ENCODE measurements at regions of chr2 and their contacts with region 1.

Region 1: DNA sequence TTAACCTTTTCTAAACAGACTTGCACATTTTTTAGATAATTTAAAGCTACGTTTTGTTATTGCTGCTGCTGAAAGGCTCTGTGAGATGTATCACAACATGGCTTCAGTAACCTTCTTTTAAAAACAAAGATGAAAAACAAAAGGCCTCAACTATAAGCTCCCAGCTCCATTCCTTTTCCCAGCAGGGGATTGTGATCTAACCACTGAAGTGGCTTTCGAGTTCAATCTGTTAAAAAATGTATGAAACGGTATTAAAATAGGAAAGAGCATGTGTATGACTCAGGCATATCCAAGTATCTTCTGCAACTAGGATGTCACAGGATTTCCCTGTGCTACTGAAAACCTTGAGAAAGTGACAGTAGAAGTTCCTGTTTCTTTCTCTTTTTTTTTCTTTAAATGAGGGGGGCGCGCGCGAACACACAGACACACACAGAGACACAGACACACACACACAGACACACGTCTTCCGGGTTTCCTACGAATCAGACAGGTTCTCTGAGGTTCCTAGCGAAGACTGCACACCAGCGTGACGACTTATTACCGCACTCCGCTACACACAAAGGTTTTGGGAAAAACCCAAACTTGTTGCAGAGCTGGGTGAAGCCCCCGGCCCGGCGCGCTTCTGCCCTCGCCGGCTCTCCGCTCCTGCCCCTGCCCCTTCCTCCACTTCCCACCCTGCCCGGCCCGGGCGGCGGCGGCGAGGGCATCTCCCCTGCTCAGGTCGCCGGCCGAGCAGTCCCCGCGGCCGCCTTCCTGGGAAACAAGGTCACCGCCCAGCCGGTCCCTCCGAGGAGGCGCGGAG is 86.8 kb downstream of the RBMS1 start:
- DNase-seq: peak; percentile 78

Region 2: GRCh38 chr2:160269803-160270570 is 136.8 kb before region 1 on chr2:
- intact Hi-C with region 1: loop called (anchors 5 kb)
- DNase-seq: peak; percentile 95

Region 3: DNA sequence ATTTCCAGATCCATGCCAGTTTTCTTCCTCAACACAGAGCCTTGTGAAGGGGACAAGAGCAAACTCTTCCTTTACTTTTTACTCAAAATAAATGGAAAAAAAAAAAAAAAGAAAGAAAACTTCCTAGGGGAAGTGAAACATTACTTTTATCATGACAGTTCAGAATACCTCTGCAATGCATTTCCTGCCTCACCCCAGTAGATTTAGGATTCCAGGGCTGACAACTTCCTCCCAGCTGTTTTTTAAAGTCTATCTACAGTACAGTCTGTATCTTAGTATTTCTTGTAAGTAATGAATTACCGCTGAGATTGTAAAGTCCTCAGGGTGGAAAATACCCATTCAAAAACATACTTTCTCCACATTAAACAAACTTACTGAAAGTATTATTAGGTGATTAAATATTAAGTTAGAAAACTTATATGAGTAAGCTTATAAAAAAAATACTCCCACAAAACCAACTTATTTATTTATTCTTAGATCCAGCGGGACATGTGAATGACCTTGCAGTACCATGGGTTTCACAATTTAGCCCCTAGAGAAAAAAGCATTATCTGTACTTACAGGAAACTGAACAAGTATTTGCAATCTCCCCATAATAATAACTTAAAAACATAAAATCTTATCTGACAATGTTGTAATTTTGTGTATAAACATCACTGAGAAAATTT is 30.9 kb before region 1 on chr2:
- intact Hi-C with region 1: loop called (anchors 5 kb)
- DNase-seq: no peak

Region 4: GRCh38 chr2:160533476-160533875 is 126.7 kb after region 1 on chr2:
- intact Hi-C with region 1: no loop called
- DNase-seq: no peak

Region 5: GRCh38 chr2:160666154-160667060 is 259.6 kb after region 1 on chr2:
- intact Hi-C with region 1: loop called (anchors 10 kb)
- DNase-seq: no peak

Region 6: DNA sequence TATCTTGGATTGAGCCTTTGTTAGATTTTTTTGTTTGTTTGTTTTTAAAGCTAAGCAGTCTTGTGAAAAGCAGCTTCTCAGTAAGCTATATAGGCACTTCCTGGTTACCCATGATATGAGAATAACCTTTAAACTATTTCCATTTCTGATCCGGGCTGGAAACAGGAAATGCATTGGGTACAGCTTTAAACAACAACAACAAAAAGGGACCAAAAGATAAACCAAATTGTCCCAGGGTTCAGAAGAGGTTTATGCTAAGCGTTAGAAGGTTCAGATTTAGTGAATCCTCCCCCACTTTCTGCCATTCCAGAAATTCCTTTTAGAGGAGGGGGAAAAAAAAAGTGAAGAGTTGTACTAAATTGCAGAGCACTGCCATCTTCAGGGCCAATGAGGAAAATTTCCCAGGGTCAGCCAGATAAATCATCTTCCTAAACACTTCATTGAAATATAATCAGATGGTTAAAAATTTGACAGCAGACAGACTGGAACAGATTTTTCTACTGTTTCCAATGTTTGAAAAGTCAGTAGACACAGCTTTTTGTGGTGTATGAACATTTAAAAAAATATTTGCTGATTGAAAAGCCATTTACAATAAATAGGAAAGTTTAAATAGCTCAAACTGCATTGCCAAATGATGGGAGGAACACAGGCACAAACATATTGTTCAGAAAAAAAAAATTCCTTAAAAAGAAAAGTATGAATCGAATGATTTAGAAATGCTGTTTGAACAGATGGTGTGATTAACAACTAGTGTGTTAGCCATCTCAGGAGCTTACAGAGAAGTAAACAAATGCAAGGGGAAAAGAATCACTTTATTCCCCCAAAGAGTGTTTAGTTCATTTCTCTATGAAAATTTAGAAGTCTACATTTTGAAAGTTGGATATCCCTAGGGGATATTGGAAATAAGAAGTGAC is 563.5 kb after region 1 on chr2:
- intact Hi-C with region 1: loop called (anchors 10 kb)
- DNase-seq: no peak